HCT116 (cell line): ENCODE measurements at regions of chr9 and their contacts with region 1.

Region 1: GRCh38 chr9:98315551-98316060 is 60.2 kb upstream of the TBC1D2 start:
- DNase-seq: peak; percentile 74
- ATAC-seq: peak; percentile 98
- H3K4me3 ChIP-seq: no peak overlapping the region
- H3K27ac ChIP-seq: no peak overlapping the region
- H3K4me1 ChIP-seq: peaks cover 0 to 4% of the 10 kb centered on the region in 2 experiments; a peak in 1 of 4 replicates
- H3K27me3 ChIP-seq: no peaks in the 10 kb centered on the region
- CTCF ChIP-seq: peak; percentile 94 to 99 (median 96)
- POLR2A ChIP-seq: no peak
- RAD21 ChIP-seq: peak; percentile 97

Region 2: GRCh38 chr9:98391867-98392266 is 76.3 kb after region 1 on chr9:
- CTCF ChIA-PET with region 1: no interaction called
- POLR2A ChIA-PET with region 1: no interaction called
- RAD21 ChIA-PET with region 1: no interaction called
- intact Hi-C with region 1: no loop called
- DNase-seq: no peak
- ATAC-seq: no peak
- H3K4me3 ChIP-seq: no peak overlapping the region
- H3K27ac ChIP-seq: no peak overlapping the region
- H3K4me1 ChIP-seq: no peaks in the 10 kb centered on the region
- H3K27me3 ChIP-seq: peaks cover 21% of the 10 kb centered on the region; the same call in 1 of the 2 replicates
- CTCF ChIP-seq: no peak
- POLR2A ChIP-seq: no peak
- RAD21 ChIP-seq: no peak

Region 3: GRCh38 chr9:98523231-98523896 is 207.8 kb after region 1 on chr9:
- CTCF ChIA-PET with region 1: interaction called, 7 read pairs
- POLR2A ChIA-PET with region 1: no interaction called
- RAD21 ChIA-PET with region 1: interaction called in 1 of 2 experiments, 4 read pairs
- intact Hi-C with region 1: loop called (anchors 5 kb)
- DNase-seq: no peak
- ATAC-seq: peak; percentile 81
- H3K4me3 ChIP-seq: no peak overlapping the region
- H3K27ac ChIP-seq: no peak overlapping the region
- H3K4me1 ChIP-seq: no peaks in the 10 kb centered on the region
- H3K27me3 ChIP-seq: no peaks in the 10 kb centered on the region
- CTCF ChIP-seq: peak; percentile 30 to 51 (median 42); a peak in 5 of 6 replicates
- POLR2A ChIP-seq: no peak
- RAD21 ChIP-seq: peak; percentile 51

Region 4: DNA sequence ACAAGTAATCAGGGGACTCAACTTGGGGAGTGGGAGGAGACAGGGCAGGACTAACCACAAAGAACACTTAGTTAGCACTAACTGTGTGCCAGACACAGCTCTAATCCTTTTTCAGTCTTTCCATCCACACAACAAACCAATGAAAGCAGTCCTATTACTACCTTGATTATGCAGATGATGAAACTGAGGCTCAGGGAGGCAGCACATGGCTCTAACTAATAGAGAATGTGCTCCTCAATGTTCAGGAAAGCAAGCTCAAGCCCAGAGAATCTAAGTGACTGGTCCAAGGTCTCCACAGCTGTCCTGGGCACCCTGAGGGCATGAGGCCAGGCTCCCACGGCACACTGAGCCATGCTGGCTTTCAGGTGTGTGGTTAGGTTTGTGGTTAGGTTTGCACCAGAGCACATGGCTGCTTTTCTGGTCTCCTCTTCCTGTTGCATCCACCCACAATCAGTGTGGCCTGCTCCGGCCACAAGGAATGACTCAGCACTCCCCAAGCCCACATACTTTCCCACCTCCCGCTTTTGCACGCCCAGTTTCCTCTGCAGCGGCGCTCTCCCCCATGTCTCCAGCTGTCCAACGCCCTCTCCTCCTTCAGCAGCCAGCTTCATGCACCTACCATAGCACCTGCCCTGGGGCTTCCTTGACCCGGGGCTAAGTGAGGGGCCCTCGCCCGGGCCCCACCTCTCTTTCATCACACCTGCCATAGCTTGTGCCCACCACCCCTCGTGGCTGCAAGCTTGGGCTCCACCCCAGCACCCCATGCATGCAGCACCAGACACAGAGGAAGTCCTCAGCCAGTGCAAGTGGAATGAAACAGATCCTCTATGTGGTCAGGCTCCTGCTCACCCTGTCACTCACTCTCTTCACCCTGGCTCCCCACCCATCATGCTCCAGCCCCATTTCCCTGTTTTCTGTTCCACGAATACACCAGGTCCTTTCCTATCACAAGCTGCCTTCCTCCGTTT is 260.1 kb after region 1 on chr9:
- CTCF ChIA-PET with region 1: no interaction called
- POLR2A ChIA-PET with region 1: no interaction called
- RAD21 ChIA-PET with region 1: no interaction called
- intact Hi-C with region 1: loop called (anchors 10 kb)
- DNase-seq: no peak
- ATAC-seq: peak; percentile 39; the same call in 1 of the 2 replicates
- H3K4me3 ChIP-seq: no peak overlapping the region
- H3K27ac ChIP-seq: no peak overlapping the region
- H3K4me1 ChIP-seq: peaks cover 4 to 11% of the 10 kb centered on the region in 2 experiments; a peak in 2 of 4 replicates
- H3K27me3 ChIP-seq: 0 out of 2 replicates have a peak, but pooled peaks cover 5% of the 10 kb centered on the region
- CTCF ChIP-seq: no peak
- POLR2A ChIP-seq: no peak
- RAD21 ChIP-seq: no peak

Region 5: GRCh38 chr9:98707166-98708102 is 391.8 kb after region 1 on chr9:
- CTCF ChIA-PET with region 1: no interaction called
- POLR2A ChIA-PET with region 1: no interaction called
- RAD21 ChIA-PET with region 1: no interaction called
- intact Hi-C with region 1: loop called (anchors 1 kb)
- DNase-seq: peak; percentile 3
- ATAC-seq: peak; percentile 91
- H3K4me3 ChIP-seq: no peak overlapping the region
- H3K27ac ChIP-seq: no peak overlapping the region
- H3K4me1 ChIP-seq: no peaks in the 10 kb centered on the region
- H3K27me3 ChIP-seq: peaks cover 10% of the 10 kb centered on the region
- CTCF ChIP-seq: peak; percentile 19 to 54 (median 54); a peak in 4 of 6 replicates
- POLR2A ChIP-seq: no peak
- RAD21 ChIP-seq: peak; percentile 65

Region 6: GRCh38 chr9:98775831-98776441 is 460.3 kb after region 1 on chr9:
- CTCF ChIA-PET with region 1: interaction called, 36 read pairs
- POLR2A ChIA-PET with region 1: no interaction called
- RAD21 ChIA-PET with region 1: interaction called in 1 of 2 experiments, 8 read pairs
- intact Hi-C with region 1: loop called (anchors 1 kb)
- DNase-seq: peak; percentile 60
- ATAC-seq: peak; percentile 63
- H3K4me3 ChIP-seq: no peak overlapping the region
- H3K27ac ChIP-seq: no peak overlapping the region
- H3K4me1 ChIP-seq: peaks cover 0 to 12% of the 10 kb centered on the region in 2 experiments; a peak in 2 of 4 replicates
- H3K27me3 ChIP-seq: no peaks in the 10 kb centered on the region
- CTCF ChIP-seq: peak; percentile 60 to 85 (median 80); a peak in 5 of 6 replicates
- POLR2A ChIP-seq: no peak
- RAD21 ChIP-seq: peak; percentile 76

Region 7: DNA sequence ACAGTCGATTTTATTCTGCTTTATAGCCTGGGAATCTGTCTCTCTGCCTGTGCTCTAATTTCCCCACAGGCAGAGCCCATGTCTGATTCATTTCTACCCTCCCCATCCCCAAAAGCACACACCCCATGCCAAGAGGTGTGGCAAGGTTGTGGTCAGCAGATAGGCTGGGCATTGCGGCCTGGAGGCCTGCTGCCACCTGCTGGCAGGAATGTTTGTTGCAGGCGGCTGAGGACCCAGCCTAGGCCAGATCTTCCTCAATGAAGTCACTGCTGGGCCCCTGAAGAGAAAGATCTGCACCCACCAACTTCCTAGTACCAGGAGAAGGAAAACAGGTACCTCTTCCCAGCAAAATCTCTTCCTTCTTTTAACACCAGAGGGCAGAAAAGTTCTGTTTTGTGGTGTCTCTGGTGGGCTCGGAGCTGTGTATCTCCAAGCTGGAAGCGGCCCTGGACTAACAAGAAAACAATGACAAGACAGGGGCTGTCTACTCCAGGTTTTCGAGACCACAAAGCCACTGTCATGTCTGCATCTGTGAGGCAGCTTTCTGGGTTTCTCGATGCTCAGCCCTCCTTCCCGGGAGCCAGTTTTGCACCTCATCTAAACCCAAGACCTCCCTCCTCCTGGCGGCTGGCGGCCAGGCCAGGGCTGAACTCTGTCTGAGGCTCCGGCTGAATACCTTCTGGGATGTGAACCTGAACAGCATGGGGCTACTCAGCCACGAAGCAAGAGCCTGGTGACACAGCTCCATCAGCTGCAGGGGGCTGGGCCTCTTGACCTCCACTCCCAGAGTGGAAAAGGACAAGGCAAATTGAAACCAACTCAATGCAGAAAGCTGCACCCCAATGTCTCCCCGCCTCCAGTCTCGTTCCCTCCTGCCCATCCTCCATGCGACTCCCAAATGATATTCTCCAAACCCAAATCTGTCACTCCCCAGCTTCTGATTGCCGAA is 475.8 kb after region 1 on chr9:
- CTCF ChIA-PET with region 1: no interaction called
- POLR2A ChIA-PET with region 1: no interaction called
- RAD21 ChIA-PET with region 1: no interaction called
- intact Hi-C with region 1: loop called (anchors 5 kb)
- DNase-seq: peak; percentile 72
- ATAC-seq: peak; percentile 85
- H3K4me3 ChIP-seq: no peak overlapping the region
- H3K27ac ChIP-seq: 0 out of 2 replicates have a peak overlapping the region, but pooled peaks have one; percentile 19
- H3K4me1 ChIP-seq: peaks cover 15 to 59% of the 10 kb centered on the region in 2 experiments
- H3K27me3 ChIP-seq: no peaks in the 10 kb centered on the region
- CTCF ChIP-seq: peak; percentile 78 to 99 (median 95)
- POLR2A ChIP-seq: no peak
- RAD21 ChIP-seq: peak; percentile 82

Region 8: GRCh38 chr9:98848450-98849149 is 533.0 kb after region 1 on chr9:
- CTCF ChIA-PET with region 1: no interaction called
- POLR2A ChIA-PET with region 1: no interaction called
- RAD21 ChIA-PET with region 1: no interaction called
- intact Hi-C with region 1: loop called (anchors 1 kb)
- DNase-seq: peak; percentile 93
- ATAC-seq: peak; percentile 97
- H3K4me3 ChIP-seq: no peak overlapping the region
- H3K27ac ChIP-seq: no peak overlapping the region
- H3K4me1 ChIP-seq: peaks cover 9 to 39% of the 10 kb centered on the region in 2 experiments; a peak in 3 of 4 replicates
- H3K27me3 ChIP-seq: no peaks in the 10 kb centered on the region
- CTCF ChIP-seq: peak; percentile 90 to 93 (median 91)
- POLR2A ChIP-seq: no peak
- RAD21 ChIP-seq: peak; percentile 97